MCF 10A (cell line): ENCODE measurements at regions of chr3 and their contacts with region 1.

Region 1: GRCh38 chr3:158845765-158846350 is 44.0 kb downstream of the MFSD1 start:
- DNase-seq: peak; percentile 51
- H3K4me3 Mint-ChIP-seq: no peak overlapping the region
- H3K27ac Mint-ChIP-seq: no peak overlapping the region
- H3K4me1 Mint-ChIP-seq: no peaks in the 10 kb centered on the region
- H3K27me3 Mint-ChIP-seq: no peaks in the 10 kb centered on the region
- CTCF ChIP-seq: peak; percentile 72

Region 2: GRCh38 chr3:158801696-158802408 is 44.0 kb before region 1 on chr3 and contains the start of gene MFSD1:
- CTCF ChIA-PET with region 1: no interaction called
- POLR2A ChIA-PET with region 1: interaction called, 4 read pairs
- intact Hi-C with region 1: loop called (anchors 1 kb)
- DNase-seq: peak; percentile 88
- H3K4me3 Mint-ChIP-seq: peak within 1 kb of the TSS; percentile 81
- H3K27ac Mint-ChIP-seq: peak within 1 kb of the TSS; percentile 86
- H3K4me1 Mint-ChIP-seq: peaks cover 23% of the 10 kb centered on the region
- H3K27me3 Mint-ChIP-seq: no peaks in the 10 kb centered on the region
- CTCF ChIP-seq: no peak
- total RNA-seq, gene MFSD1: 28.9 and 34.7 TPM in 2 replicates

Region 3: GRCh38 chr3:158830391-158830790 is 15.5 kb before region 1 on chr3:
- CTCF ChIA-PET with region 1: interaction called, 14 read pairs
- POLR2A ChIA-PET with region 1: no interaction called
- intact Hi-C with region 1: no loop called
- DNase-seq: peak; percentile 27
- H3K4me3 Mint-ChIP-seq: no peak overlapping the region
- H3K27ac Mint-ChIP-seq: no peak overlapping the region
- H3K4me1 Mint-ChIP-seq: no peaks in the 10 kb centered on the region
- H3K27me3 Mint-ChIP-seq: no peaks in the 10 kb centered on the region
- CTCF ChIP-seq: no peak

Region 4: DNA sequence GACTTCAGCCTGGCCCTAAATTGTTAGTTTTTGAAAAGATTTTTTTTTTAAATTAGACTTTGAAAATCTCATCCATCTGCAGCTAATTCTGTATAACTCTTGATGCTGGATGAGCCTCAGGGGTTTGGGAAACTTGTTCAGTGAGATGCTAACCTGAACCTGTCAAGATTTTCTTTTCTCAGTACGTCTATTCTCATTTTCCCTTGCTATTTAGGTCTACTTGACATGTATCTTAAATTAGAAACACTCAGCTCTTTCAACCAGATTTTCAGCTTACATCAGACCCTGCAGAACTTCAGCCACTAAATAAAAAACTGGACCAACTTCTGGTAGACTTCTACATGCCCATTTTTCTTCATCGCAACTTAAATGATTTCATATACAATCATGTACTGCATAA is 17.4 kb after region 1 on chr3:
- CTCF ChIA-PET with region 1: interaction called, 22 read pairs
- POLR2A ChIA-PET with region 1: no interaction called
- intact Hi-C with region 1: no loop called
- DNase-seq: no peak
- H3K4me3 Mint-ChIP-seq: no peak overlapping the region
- H3K27ac Mint-ChIP-seq: no peak overlapping the region
- H3K4me1 Mint-ChIP-seq: no peaks in the 10 kb centered on the region
- H3K27me3 Mint-ChIP-seq: no peaks in the 10 kb centered on the region
- CTCF ChIP-seq: no peak

Region 5: GRCh38 chr3:159252772-159253384 is 407.0 kb after region 1 on chr3:
- CTCF ChIA-PET with region 1: interaction called, 231 read pairs
- POLR2A ChIA-PET with region 1: no interaction called
- intact Hi-C with region 1: loop called (anchors 2 kb)
- DNase-seq: peak; percentile 54
- H3K4me3 Mint-ChIP-seq: no peak overlapping the region
- H3K27ac Mint-ChIP-seq: no peak overlapping the region
- H3K4me1 Mint-ChIP-seq: no peaks in the 10 kb centered on the region
- H3K27me3 Mint-ChIP-seq: peaks cover 61% of the 10 kb centered on the region
- CTCF ChIP-seq: peak; percentile 76

Region 6: GRCh38 chr3:159266779-159267178 is 420.9 kb after region 1 on chr3:
- CTCF ChIA-PET with region 1: interaction called, 231 read pairs
- POLR2A ChIA-PET with region 1: no interaction called
- intact Hi-C with region 1: no loop called
- DNase-seq: peak; percentile 76
- H3K4me3 Mint-ChIP-seq: no peak overlapping the region
- H3K27ac Mint-ChIP-seq: no peak overlapping the region
- H3K4me1 Mint-ChIP-seq: no peaks in the 10 kb centered on the region
- H3K27me3 Mint-ChIP-seq: peaks cover 5% of the 10 kb centered on the region
- CTCF ChIP-seq: peak; percentile 41

Region 7: GRCh38 chr3:159280386-159281191 is 434.7 kb after region 1 on chr3:
- CTCF ChIA-PET with region 1: no interaction called
- POLR2A ChIA-PET with region 1: no interaction called
- intact Hi-C with region 1: no loop called
- DNase-seq: no peak
- H3K4me3 Mint-ChIP-seq: no peak overlapping the region
- H3K27ac Mint-ChIP-seq: no peak overlapping the region
- H3K4me1 Mint-ChIP-seq: no peaks in the 10 kb centered on the region
- H3K27me3 Mint-ChIP-seq: peaks cover under 1% of the 10 kb centered on the region
- CTCF ChIP-seq: no peak

Region 8: GRCh38 chr3:159616212-159616825 is 770.5 kb after region 1 on chr3:
- CTCF ChIA-PET with region 1: interaction called, 3 read pairs
- POLR2A ChIA-PET with region 1: no interaction called
- intact Hi-C with region 1: loop called (anchors 10 kb)
- DNase-seq: peak; percentile 67
- H3K4me3 Mint-ChIP-seq: no peak overlapping the region
- H3K27ac Mint-ChIP-seq: no peak overlapping the region
- H3K4me1 Mint-ChIP-seq: peaks cover 14% of the 10 kb centered on the region
- H3K27me3 Mint-ChIP-seq: no peaks in the 10 kb centered on the region
- CTCF ChIP-seq: peak; percentile 83